ENCODE measurements at regions of chr2 and their contacts with region 1.

Region 1: GRCh38 chr2:68828887-68829708 is 42.1 kb downstream of the BMP10 start:
- DNase-seq: peak; percentile 74
- H3K4me3 Mint-ChIP-seq: peak overlapping the region; percentile 58
- H3K27ac Mint-ChIP-seq: peak overlapping the region; percentile 88
- H3K4me1 Mint-ChIP-seq: peaks cover 63% of the 10 kb centered on the region
- H3K27me3 Mint-ChIP-seq: no peaks in the 10 kb centered on the region

Region 2: DNA sequence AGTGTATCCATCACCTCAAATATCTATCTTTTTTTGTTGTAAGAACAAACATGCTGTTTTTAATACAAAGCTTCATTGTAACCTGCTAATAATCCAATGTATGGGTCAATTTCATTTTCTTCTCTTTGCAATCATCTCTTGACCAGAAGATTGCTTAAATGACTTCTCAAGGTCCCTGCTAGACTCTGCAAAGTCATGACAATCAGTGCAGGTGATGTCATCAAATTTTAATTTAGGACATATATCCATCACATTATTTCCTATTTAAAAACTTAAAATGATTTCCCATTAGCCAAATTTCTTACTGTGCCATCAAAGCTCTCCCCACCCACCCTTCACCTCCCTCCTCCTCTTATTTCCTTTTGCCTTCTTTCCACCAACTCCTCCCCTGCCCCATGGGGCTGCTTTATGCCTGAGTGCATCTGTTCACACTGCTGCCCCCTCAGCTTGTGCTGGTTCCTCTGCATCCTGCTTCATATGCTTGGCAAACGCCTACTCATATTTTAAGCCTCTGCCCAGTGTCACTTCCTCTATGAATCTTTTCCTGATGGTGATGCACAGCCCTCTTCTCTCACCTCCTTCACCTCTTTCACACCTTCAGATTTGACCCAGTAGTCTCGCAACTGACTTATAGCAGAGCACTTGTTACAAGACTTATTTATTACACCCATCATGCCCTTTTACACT is 443.7 kb before region 1 on chr2:
- intact Hi-C with region 1: loop called (anchors 10 kb)
- DNase-seq: no peak
- H3K4me3 Mint-ChIP-seq: no peak overlapping the region
- H3K27ac Mint-ChIP-seq: no peak overlapping the region
- H3K4me1 Mint-ChIP-seq: peaks cover 36% of the 10 kb centered on the region
- H3K27me3 Mint-ChIP-seq: peaks cover 18% of the 10 kb centered on the region

Region 3: GRCh38 chr2:68766376-68766845 is 62.7 kb before region 1 on chr2:
- intact Hi-C with region 1: loop called (anchors 1 kb)
- DNase-seq: peak; percentile 70
- H3K4me3 Mint-ChIP-seq: peak overlapping the region; percentile 68
- H3K27ac Mint-ChIP-seq: peak overlapping the region; percentile 93
- H3K4me1 Mint-ChIP-seq: peaks cover 91% of the 10 kb centered on the region
- H3K27me3 Mint-ChIP-seq: no peaks in the 10 kb centered on the region

Region 4: GRCh38 chr2:68811364-68811763 is 17.7 kb before region 1 on chr2:
- intact Hi-C with region 1: loop called (anchors 2 kb)
- DNase-seq: no peak
- H3K4me3 Mint-ChIP-seq: no peak overlapping the region
- H3K27ac Mint-ChIP-seq: peak overlapping the region; percentile 8
- H3K4me1 Mint-ChIP-seq: peaks cover 22% of the 10 kb centered on the region
- H3K27me3 Mint-ChIP-seq: no peaks in the 10 kb centered on the region